Cardiac septum (tissue), 1 donor: ENCODE measurements at regions of chr4 and their contacts with region 1.

Region 1: GRCh38 chr4:6783053-6783981 is 790 bp downstream of the KIAA0232 start:
- DNase-seq: peak; percentile 98

Region 2: GRCh38 chr4:6855692-6856297 is 72.5 kb after region 1 on chr4:
- intact Hi-C with region 1: loop called (anchors 5 kb)
- DNase-seq: no peak

Region 3: DNA sequence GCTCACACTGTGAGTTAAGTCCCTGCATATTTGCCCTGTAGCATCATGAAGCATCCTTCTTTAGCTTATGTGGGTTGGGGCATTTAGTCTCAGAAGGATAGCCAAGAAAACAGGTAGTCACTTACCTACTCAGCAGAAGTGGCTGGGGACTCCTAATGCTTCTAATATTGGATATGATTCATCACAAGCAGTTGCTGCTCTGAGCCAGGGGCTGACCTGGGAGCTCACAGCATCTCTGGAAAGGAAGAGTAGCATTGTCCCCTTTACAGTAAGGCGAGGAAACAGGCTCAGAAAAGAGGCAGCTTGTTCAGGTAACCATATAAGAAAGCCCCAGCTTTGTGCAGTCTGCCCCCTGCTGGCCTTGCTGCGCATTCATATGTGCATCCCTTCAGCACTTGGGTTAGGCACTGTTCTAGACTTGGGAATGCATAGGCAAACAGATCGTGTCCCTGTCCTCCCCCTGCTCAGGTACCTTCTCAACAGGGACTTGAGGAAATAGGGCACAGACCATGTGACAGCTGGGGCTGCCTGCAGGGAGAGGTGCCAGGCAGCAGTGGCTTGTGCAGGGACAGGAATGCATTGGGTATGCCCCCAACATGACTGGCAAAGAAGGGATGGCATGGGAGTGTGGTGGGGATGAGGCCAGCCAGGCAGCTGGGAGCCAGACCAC is 90.6 kb after region 1 on chr4:
- intact Hi-C with region 1: loop called (anchors 5 kb)
- DNase-seq: peak; percentile 88

Region 4: DNA sequence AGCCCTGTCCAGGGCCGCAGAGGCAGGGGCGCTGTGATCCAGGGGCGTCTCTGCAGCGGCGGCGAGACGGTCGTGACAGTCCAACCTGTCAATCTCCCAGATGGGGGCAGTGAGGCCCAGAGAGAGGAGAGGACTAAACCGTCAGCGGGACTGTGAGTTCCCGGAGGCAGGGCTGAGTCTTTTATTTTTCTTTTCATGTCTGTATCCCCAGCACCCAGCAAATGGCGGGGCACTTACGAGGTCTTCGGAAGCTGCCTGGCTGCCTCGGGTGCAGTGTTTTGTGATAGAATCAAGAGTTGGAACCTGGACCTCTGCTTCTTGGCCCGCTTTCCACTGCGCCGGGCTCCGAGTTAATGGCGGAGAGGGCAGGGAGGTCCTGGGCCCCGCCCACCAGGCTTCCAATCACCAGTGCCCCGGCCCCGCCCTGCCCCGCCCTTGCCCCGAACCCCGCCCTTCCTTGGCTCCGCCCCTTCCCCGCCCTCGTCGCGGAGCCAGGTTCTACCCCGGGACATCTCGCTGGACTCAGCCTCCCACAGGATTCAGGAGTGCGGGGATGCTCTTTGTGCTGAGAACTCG is 319.8 kb after region 1 on chr4:
- intact Hi-C with region 1: no loop called
- DNase-seq: peak; percentile 93